Cardiac septum (tissue), 1 donor: ENCODE measurements at regions of chr5 and their contacts with region 1.

Region 1: GRCh38 chr5:77186652-77187370 is 23.7 kb upstream of the PDE8B start:
- DNase-seq: no peak

Region 2: GRCh38 chr5:77030097-77031071 is 156.4 kb before region 1 on chr5 and contains the start of gene AGGF1:
- intact Hi-C with region 1: no loop called
- DNase-seq: peak; percentile 97
- total RNA-seq, gene AGGF1: 16.9 TPM

Region 3: DNA sequence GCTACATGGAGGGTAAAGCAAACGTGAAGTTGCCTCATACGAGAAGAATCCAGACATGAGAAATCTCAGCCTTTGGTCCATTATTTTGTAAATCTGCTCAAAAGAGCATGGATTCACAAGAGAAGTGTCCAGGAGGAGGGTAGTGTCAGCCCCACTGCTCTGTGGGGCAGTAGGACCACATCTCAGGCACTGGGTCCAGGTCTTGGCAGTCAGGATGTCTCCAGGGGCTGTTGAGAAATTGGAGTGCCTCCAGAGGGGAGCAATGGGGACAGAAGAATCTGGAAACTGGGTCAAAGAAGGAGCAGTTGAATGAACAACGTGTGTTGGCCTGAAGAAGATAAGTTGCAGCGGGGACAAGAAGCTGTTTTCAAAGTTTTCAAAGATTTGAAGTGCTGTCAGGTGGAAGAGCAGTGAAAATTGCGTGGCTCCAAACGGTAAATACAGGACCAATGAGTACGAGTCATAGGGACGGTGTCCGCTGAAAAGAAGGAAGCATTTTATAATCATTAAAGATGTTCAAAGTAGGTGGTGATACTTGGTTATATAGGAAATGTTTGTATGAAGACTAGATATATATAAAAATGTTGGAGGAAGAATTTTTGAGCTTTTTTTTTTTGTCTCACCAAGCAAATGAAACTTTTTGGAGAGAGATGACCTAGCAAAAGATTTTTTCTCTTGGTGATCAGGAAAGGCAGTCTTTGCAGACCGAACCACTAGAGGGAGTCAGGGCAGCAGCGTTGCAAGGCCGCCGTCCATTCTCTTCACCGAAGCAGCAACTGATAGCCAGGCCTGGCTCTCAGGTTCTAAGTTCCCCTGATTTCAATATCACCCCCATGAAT is 42.6 kb before region 1 on chr5:
- intact Hi-C with region 1: no loop called
- DNase-seq: peak; percentile 82

Region 4: DNA sequence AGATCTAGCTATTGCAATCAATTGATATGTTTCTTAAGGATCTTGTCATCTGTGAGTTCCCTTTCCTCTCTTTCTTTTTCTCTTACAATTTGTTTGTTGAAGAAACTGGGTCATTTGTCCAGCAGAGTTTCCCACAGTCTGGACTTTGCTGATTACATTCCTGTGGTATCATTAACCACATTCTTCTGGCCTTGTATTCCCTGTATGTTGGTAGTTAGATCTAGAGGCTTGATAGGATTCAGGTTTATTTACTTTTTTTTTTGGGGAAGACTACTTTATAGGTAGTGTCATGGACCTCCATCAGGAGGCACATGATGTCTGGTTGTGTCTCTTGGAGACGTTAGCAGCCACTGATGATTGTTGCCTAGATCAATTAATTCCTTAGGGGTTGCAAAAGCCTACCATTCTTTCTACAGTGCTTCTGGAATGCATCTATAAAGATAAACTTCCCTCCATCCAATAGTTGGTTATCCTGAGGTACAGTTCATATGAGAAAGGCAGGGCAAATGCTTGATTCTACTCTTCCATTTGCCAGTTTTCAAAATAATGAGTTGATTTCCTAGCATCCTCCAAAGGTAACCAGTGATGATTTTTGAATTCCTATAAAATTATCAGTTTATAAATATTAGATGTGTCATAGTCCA is 38.0 kb after region 1 on chr5:
- intact Hi-C with region 1: loop called (anchors 5 kb)
- DNase-seq: no peak

Region 5: DNA sequence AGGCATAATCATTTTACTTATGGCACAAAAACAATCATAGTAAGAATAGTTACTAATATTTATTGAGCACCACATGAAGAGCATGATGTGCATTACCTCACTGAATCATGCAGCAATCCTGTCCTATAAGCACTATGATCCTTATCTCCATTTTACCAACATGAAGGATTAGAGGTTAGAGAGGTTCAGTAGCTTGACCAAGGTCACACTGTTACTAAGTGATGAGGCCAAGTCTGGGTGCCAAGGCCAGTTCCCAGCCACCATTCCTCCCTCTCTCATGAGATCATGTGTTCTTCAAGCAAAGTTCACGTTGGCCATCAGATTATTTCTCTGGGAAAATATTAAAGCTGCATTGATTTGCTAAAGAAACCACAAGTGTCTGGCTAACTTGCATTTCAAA is 54.6 kb after region 1 on chr5:
- intact Hi-C with region 1: no loop called
- DNase-seq: no peak

Region 6: DNA sequence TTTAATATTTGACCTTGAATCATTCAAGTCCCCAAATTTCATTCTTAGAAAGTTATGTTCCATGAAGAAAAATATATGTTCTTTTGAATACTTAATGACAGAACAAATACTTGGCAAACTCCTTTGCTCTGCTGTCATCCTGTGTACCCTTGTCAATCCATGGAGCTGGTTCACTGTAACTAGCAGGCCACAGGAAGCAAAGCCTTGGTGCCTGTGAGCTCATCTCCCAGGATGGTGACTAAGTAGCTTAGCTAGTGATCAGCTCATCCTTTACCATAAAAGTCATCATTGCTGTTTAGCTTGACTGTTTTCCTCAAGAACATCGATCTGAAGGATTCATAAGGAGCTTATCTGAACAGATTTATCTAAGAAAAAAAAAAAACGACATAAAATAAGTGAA is 239.9 kb after region 1 on chr5:
- intact Hi-C with region 1: no loop called
- DNase-seq: no peak